ENCODE measurements at regions of chr12 and their contacts with region 1.

Region 1: GRCh38 chr12:8890313-8891085 is 23.8 kb upstream of the PHC1 start:
- DNase-seq: peak; percentile 63
- ATAC-seq: peak; percentile 69
- H3K4me3 Mint-ChIP-seq: peak overlapping the region; percentile 80
- H3K27ac Mint-ChIP-seq: no peak overlapping the region
- H3K4me1 Mint-ChIP-seq: peaks cover 5% of the 10 kb centered on the region
- H3K27me3 Mint-ChIP-seq: peaks cover 13% of the 10 kb centered on the region

Region 2: GRCh38 chr12:8658346-8658745 is 232.2 kb before region 1 on chr12:
- CTCF ChIA-PET with region 1: interaction called, 23 read pairs
- POLR2A ChIA-PET with region 1: interaction called, 4 read pairs
- DNase-seq: no peak
- ATAC-seq: no peak
- H3K4me3 Mint-ChIP-seq: no peak overlapping the region
- H3K27ac Mint-ChIP-seq: no peak overlapping the region
- H3K4me1 Mint-ChIP-seq: no peaks in the 10 kb centered on the region
- H3K27me3 Mint-ChIP-seq: peaks cover 12% of the 10 kb centered on the region

Region 3: DNA sequence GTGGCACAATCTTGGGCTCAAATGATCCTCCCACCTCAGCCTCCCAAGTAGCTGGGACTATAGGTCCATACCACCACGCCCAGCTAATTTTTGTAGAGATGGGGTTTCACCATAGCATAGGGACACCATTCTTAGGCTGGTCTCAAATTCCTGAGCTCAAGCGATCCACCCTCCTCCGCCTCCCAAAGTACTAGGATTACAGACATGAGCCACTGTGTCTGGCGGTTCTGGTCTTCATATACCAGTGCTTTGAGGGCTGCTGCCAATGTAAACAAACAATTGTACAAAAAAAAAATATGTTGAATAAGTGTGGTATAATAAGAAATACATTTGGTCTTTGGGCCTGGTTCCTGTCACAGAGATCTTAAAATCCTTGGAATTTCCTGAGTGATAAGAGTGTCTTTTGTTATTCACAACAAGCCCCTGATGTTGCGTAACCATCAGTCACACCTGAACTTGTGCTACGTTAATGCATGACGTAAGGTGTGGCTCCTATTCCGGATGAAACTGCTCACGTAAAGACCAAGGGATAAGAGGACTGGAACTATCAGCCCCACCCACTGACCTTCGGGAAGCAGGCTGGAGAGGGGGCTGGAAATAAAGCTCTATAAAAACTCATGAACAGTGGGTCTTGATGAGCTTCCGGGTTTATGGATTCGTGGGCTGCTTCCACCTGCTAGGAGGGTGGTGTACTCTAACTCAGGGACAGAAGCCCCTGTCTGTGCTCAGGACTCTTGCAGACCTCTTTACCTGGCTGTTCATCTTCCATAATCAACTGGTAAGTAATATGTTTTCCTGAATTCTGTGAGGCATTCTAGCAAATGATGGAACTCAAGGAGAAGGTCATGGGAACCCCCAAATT is 209.2 kb before region 1 on chr12:
- CTCF ChIA-PET with region 1: interaction called, 20 read pairs
- POLR2A ChIA-PET with region 1: no interaction called
- DNase-seq: no peak
- ATAC-seq: no peak
- H3K4me3 Mint-ChIP-seq: no peak overlapping the region
- H3K27ac Mint-ChIP-seq: no peak overlapping the region
- H3K4me1 Mint-ChIP-seq: no peaks in the 10 kb centered on the region
- H3K27me3 Mint-ChIP-seq: peaks cover 6% of the 10 kb centered on the region

Region 4: GRCh38 chr12:8860165-8860961 is 30.1 kb before region 1 on chr12:
- CTCF ChIA-PET with region 1: interaction called, 15 read pairs
- POLR2A ChIA-PET with region 1: no interaction called
- DNase-seq: peak; percentile 43
- ATAC-seq: no peak
- H3K4me3 Mint-ChIP-seq: no peak overlapping the region
- H3K27ac Mint-ChIP-seq: no peak overlapping the region
- H3K4me1 Mint-ChIP-seq: no peaks in the 10 kb centered on the region
- H3K27me3 Mint-ChIP-seq: no peaks in the 10 kb centered on the region

Region 5: DNA sequence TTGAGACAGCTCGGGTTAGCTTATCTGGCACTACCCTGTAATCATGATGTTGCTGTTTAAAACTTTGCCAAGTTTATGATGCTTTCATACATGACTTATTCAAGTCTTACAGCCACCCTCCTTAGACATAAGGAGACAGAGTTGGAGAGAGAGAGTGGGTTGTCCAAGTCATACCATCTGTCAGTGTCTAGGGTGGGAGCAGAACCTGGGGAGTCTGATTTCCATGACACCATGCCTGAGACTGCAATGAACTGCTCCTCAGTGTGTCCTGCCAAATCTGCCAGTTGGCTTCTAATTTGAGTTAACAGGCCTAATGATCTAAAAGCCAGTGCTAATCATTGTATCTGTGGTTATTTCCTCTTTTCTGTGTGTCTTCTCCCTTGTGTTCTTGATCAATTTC is 19.9 kb before region 1 on chr12:
- CTCF ChIA-PET with region 1: interaction called, 10 read pairs
- POLR2A ChIA-PET with region 1: no interaction called
- DNase-seq: no peak
- ATAC-seq: no peak
- H3K4me3 Mint-ChIP-seq: no peak overlapping the region
- H3K27ac Mint-ChIP-seq: no peak overlapping the region
- H3K4me1 Mint-ChIP-seq: no peaks in the 10 kb centered on the region
- H3K27me3 Mint-ChIP-seq: peaks cover 4% of the 10 kb centered on the region

Region 6: GRCh38 chr12:8914716-8915526 is 24.4 kb after region 1 on chr12:
- CTCF ChIA-PET with region 1: interaction called, 14 read pairs
- POLR2A ChIA-PET with region 1: no interaction called
- DNase-seq: peak; percentile 74
- ATAC-seq: peak; percentile 94
- H3K4me3 Mint-ChIP-seq: no peak overlapping the region
- H3K27ac Mint-ChIP-seq: no peak overlapping the region
- H3K4me1 Mint-ChIP-seq: peaks cover 8% of the 10 kb centered on the region
- H3K27me3 Mint-ChIP-seq: peaks cover 15% of the 10 kb centered on the region

Region 7: GRCh38 chr12:8949342-8950220 is 59.1 kb after region 1 on chr12 and contains the start of gene M6PR:
- CTCF ChIA-PET with region 1: interaction called, 13 read pairs
- POLR2A ChIA-PET with region 1: no interaction called
- DNase-seq: peak; percentile 96
- ATAC-seq: peak; percentile 85
- H3K4me3 Mint-ChIP-seq: peak within 1 kb of the TSS; percentile 95
- H3K27ac Mint-ChIP-seq: peak within 1 kb of the TSS; percentile 96
- H3K4me1 Mint-ChIP-seq: peaks cover 53% of the 10 kb centered on the region
- H3K27me3 Mint-ChIP-seq: no peaks in the 10 kb centered on the region
- total RNA-seq, gene M6PR: 170 to 201 TPM

Region 8: GRCh38 chr12:9240776-9241175 is 350.3 kb after region 1 on chr12:
- CTCF ChIA-PET with region 1: no interaction called
- POLR2A ChIA-PET with region 1: no interaction called
- DNase-seq: no peak
- ATAC-seq: no peak
- H3K4me3 Mint-ChIP-seq: peak overlapping the region; percentile 83
- H3K27ac Mint-ChIP-seq: no peak overlapping the region
- H3K4me1 Mint-ChIP-seq: peaks cover 16% of the 10 kb centered on the region
- H3K27me3 Mint-ChIP-seq: peaks cover 10% of the 10 kb centered on the region

Region 9: GRCh38 chr12:9364224-9365176 is 474.0 kb after region 1 on chr12:
- CTCF ChIA-PET with region 1: no interaction called
- POLR2A ChIA-PET with region 1: no interaction called
- DNase-seq: peak; percentile 63
- ATAC-seq: peak; percentile 78
- H3K4me3 Mint-ChIP-seq: peak overlapping the region; percentile 28
- H3K27ac Mint-ChIP-seq: peak overlapping the region; percentile 70
- H3K4me1 Mint-ChIP-seq: peaks cover 51% of the 10 kb centered on the region
- H3K27me3 Mint-ChIP-seq: no peaks in the 10 kb centered on the region

Measured in activated CD8-positive, alpha-beta T cell treated with anti-CD3 and anti-CD28 coated beads, Interleukin-2, amount 10 ng/mL, durations not matched to agents 7 days and 5 days (primary cell).